Activated T-helper 2 cell treated with anti-CD3 and anti-CD28 coated beads, Interferon-gamma antibody, Interleukin-2, Interleukin-4, amounts not matched to agents 10 μg/mL and 5 μg/mL and 100 μg/mL, durations not matched to agents 14 hours and 24 hours and 36 hours (primary cell): ENCODE measurements at regions of chr1 and their contacts with region 1.

Region 1: GRCh38 chr1:114670083-114671010 is 498 bp upstream of the DENND2C start:
- DNase-seq: peak; percentile 72
- H3K4me3 Mint-ChIP-seq: peak overlapping the region; percentile 86
- H3K27ac Mint-ChIP-seq: no peak overlapping the region
- H3K4me1 Mint-ChIP-seq: peaks cover 4% of the 10 kb centered on the region
- H3K27me3 Mint-ChIP-seq: peaks cover 41% of the 10 kb centered on the region

Region 2: GRCh38 chr1:113978863-113979702 is 691.3 kb before region 1 on chr1 and contains the start of gene OLFML3:
- intact Hi-C with region 1: loop called (anchors 5 kb)
- DNase-seq: no peak
- H3K4me3 Mint-ChIP-seq: no peak within 1 kb of the TSS
- H3K27ac Mint-ChIP-seq: peak within 1 kb of the TSS; percentile 32
- H3K4me1 Mint-ChIP-seq: peaks cover 39% of the 10 kb centered on the region
- H3K27me3 Mint-ChIP-seq: no peaks in the 10 kb centered on the region
- total RNA-seq, gene OLFML3: 0.11 and 0.18 TPM in 2 replicates

Region 3: GRCh38 chr1:114581335-114582287 is 88.7 kb before region 1 on chr1 and contains the start of gene BCAS2:
- intact Hi-C with region 1: loop called (anchors 5 kb)
- DNase-seq: peak; percentile 95
- H3K4me3 Mint-ChIP-seq: peak within 1 kb of the TSS; percentile 95
- H3K27ac Mint-ChIP-seq: peak within 1 kb of the TSS; percentile 97
- H3K4me1 Mint-ChIP-seq: peaks cover 17% of the 10 kb centered on the region
- H3K27me3 Mint-ChIP-seq: peaks cover 2% of the 10 kb centered on the region
- total RNA-seq, gene BCAS2: 52.1 and 54.1 TPM in 2 replicates

Region 4: DNA sequence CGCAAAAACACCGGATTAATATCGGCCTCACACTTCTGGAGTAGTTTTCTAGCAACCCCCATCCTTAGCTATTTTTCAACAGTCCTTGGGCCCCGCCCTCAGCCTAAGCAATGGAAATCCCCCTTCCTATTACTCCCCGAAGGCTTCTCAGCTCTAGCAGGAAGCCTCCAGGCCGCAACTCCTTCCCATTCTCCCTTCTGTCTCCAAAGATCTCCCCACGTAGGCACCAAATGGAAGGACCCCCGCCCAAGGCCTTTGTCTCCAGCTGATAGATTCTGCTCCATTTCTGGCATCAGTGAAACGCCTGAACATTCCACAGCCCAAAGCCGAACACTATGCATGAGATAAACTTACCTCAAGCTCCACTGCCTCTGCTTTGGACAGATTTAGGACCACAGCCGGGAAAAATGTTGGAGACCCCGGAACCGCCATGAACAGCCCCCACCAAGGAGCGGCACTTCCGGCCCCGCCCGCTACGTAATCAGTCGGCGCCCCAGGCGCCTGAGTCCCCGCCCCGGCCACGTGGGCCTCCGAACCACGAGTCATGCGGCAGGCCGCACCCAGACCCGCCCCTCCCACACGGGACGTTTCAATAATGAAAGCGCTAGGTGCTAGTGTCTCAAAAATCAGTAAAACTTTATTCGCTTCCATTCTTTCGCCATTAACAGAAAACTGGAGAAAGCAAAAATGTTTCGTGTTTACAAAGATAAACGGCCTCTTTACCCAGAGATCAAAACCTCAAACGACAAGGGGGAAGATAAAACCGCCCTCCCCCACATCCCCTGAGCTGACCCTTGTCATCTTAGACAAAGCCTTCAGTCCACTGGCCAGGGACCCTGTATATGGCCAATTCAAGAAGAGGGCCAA is 46.2 kb after region 1 on chr1 and contains the start of gene NRAS:
- intact Hi-C with region 1: loop called (anchors 1 kb)
- DNase-seq: peak; percentile 92
- H3K4me3 Mint-ChIP-seq: peak within 1 kb of the TSS; percentile 95
- H3K27ac Mint-ChIP-seq: peak within 1 kb of the TSS; percentile 93
- H3K4me1 Mint-ChIP-seq: peaks cover 26% of the 10 kb centered on the region
- H3K27me3 Mint-ChIP-seq: no peaks in the 10 kb centered on the region
- total RNA-seq, gene NRAS: 63.3 and 64.5 TPM in 2 replicates

Region 5: DNA sequence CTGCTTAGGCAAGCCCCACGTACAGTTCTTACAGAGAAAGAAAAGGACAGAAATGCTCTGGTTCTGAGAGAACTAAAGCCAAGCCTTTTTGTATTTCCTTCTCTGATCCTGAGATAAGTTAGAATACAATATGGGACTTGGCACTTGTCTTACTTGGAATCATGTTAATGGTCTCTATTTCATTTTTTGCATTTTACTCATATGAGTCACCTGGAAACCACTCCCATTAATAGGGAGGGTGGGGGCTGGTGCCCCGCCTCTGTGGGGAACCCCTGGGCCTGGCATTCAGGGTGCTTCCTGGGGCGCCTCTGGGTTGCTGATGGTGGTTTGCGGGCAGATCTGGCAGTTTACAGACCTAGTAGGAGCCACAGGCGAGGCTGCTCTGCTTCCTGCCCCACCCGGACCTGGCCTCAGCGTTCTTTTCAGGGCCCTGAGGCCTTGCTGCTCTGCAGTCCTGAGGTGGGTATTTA is 392.2 kb after region 1 on chr1:
- intact Hi-C with region 1: loop called (anchors 5 kb)
- DNase-seq: peak; percentile 92
- H3K4me3 Mint-ChIP-seq: no peak overlapping the region
- H3K27ac Mint-ChIP-seq: peak overlapping the region; percentile 93
- H3K4me1 Mint-ChIP-seq: peaks cover 36% of the 10 kb centered on the region
- H3K27me3 Mint-ChIP-seq: no peaks in the 10 kb centered on the region